Posterior vena cava (tissue), 2 donors: ENCODE measurements at regions of chr7 and their contacts with region 1.

Region 1: GRCh38 chr7:9796241-9796640 is 1177.4 kb upstream of the PHF14 start:
- DNase-seq: no peak

Region 2: DNA sequence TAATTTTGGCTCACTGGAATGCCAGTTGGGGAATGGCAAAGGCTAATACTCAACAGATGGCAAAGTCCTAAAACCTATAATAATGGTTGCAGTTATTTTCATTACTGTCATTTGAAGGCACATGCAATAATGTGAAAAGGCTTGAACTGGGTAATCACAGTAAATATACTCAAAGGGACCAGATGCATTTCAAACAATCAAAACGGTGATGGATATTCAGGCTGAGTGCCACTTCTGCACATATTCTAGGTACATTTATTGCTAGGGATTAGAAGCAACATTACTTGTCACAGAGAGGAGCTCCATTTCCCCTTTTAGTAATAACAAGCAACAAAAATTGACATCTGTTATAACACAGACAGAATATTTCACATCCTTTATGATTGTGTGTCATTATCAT is 1191.0 kb before region 1 on chr7:
- intact Hi-C with region 1: loop called in 1 of 2 experiments (anchors 5 kb)
- DNase-seq: no peak

Region 3: GRCh38 chr7:9752033-9752432 is 44.2 kb before region 1 on chr7:
- intact Hi-C with region 1: loop called in 1 of 2 experiments (anchors 2 kb)
- DNase-seq: no peak

Region 4: GRCh38 chr7:9776900-9777299 is 19.3 kb before region 1 on chr7:
- intact Hi-C with region 1: no loop called
- DNase-seq: no peak